ENCODE measurements at regions of chr9 and their contacts with region 1.

Region 1: GRCh38 chr9:37243588-37244345 is 123.4 kb downstream of the ZCCHC7 start:
- DNase-seq: no peak
- ATAC-seq: no peak
- H3K4me3 ChIP-seq: no peak overlapping the region
- H3K27ac ChIP-seq: no peak overlapping the region
- H3K4me1 ChIP-seq: peaks cover 0 to 5% of the 10 kb centered on the region in 2 experiments; a peak in 2 of 4 replicates
- H3K27me3 ChIP-seq: no peaks in the 10 kb centered on the region
- CTCF ChIP-seq: no peak
- POLR2A ChIP-seq: no peak
- RAD21 ChIP-seq: no peak

Region 2: DNA sequence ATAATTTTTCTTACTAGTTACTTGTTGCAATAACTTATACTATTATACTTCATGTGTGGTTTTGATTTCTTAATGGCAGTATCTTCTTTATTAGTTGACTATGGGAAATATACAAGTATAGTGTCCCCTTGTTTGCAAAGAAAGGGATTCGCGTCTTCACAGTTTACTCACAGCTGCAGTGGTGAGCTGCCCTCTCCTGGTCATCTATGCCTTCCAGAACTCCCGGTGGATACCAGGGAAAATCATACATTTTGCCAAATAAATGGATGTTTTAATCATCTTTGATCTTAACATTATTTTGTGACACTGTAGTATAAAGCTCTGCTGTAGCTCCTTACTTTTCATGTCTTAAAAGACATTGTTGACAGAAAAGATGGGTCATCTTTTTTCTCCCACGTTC is 18.6 kb after region 1 on chr9:
- CTCF ChIA-PET with region 1: no interaction called
- POLR2A ChIA-PET with region 1: no interaction called
- RAD21 ChIA-PET with region 1: no interaction called
- intact Hi-C with region 1: loop called (anchors 2 kb)
- DNase-seq: no peak
- ATAC-seq: no peak
- H3K4me3 ChIP-seq: no peak overlapping the region
- H3K27ac ChIP-seq: no peak overlapping the region
- H3K4me1 ChIP-seq: no peaks in the 10 kb centered on the region
- H3K27me3 ChIP-seq: no peaks in the 10 kb centered on the region
- CTCF ChIP-seq: peak; percentile 37 to 53 (median 43); a peak in 5 of 6 replicates
- POLR2A ChIP-seq: no peak
- RAD21 ChIP-seq: peak; percentile 59